ENCODE measurements at regions of chr13 and their contacts with region 1.

Region 1: DNA sequence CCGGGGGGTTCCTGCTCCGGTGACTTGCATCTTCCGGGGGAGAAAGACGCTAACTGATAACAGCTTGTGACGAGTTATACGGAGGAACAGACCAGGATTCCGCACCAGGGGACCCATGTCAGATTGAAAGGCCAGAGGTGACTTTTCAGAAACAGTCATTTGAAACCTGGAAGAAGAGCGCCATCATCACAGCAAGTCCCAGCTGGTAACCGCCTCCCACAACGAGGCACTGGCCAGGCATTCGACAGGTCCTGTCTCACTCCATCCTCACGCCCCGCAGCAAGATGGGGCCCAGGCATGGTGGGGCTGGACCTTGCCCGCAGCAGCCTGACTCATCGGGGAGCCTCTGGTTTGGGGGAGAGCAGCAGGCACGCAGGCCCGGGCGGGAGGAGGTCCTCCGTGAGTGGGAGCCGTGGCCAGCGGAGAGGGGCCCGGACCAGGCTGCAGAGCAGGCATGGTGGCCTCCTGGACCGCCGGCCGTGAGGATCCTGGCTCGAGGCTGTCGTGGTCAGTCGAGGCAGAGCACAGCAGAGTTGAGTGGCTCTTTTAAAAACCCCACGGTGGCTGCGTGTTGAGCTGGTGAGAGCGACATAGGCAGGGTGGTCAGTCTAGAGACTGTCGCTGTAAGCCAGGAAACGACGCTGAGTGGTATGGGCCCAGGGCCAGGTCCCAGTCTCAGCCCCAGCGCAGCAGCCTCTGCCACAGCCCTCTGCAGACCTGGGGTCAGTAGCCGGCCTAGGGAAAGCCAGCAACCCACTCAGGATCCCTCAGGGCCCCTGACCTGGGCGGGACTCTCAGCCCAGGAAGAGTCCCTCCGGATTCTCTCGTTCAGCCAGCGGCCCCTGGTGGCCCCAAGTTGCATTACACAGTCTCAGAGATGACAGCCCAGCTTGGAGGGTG is 94.9 kb upstream of the MCF2L start:
- DNase-seq: peak; percentile 74

Region 2: GRCh38 chr13:112606109-112607001 is 267.7 kb before region 1 on chr13:
- in situ Hi-C with region 1: no loop called
- DNase-seq: peak; percentile 92

Region 3: DNA sequence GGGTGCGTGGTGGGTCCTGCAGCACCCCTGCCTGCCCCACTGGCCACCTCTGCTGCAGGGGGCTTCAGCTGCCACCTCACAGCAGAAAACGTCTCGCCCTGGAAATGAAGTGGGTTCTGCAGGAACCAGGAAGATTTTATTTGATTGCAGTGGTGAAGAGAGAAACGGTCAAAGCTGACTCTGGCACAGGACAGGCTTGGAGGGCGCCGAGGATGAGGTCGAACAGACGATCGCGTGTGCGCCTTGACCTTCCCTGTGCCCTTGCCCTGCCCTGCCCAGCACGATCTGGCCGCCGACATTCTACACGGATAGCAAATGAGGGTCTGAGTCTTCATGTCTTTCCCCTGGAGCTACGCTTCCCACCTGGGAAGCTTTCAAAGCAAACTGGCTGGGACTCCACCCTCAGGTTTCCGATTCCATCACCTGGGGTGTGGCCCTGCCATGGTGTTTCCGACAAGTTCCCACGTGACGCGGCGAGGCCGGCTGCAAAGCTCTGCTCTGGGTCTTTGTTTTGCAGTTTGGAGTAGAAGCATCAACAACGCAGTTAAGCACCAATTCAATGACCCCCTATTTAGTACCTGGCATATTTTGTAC is 235.8 kb before region 1 on chr13:
- in situ Hi-C with region 1: loop called (anchors 25 kb)
- DNase-seq: no peak

Measured in KBM-7 (cell line).